Naive thymus-derived CD8-positive, alpha-beta T cell (primary cell): ENCODE measurements at regions of chr2 and their contacts with region 1.

Region 1: DNA sequence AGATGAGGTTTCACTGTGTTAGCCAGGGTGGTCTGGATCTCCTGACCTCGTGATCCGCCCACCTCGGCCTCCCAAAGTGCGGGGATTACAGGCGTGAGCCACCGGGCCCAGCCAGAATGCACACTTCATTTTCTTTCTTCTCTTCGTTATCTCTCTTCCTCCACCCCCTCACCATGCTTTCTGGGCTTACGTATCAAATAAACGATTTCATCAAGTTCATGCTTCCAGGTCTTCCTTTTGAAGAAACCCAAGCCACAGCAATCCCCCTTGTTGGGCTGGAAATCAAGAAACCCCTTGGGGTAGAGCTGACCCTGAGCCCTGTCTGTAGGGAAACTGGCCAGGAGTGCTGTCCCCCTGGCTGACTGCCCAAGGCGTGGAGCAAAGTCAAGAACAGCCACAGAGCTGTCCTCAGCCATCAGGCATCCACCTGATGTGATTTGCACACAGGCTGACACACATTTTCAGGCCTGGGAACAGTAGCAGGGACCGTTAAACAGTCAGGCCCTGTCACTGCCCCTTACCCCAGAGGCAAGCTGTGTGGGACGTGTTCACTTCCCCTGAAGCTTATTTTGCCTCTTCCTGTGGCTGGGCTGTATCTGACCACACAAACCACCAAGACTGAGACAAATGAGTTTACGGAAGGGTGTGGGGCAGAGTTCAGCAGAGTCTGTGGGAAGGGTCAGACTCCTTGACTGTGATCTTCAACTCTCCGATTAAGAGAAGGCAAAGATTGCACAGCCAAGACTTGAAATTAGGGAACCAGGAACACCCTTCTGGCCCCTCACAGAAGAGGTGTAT is 15.1 kb upstream of the NMUR1 start:
- DNase-seq: peak in 4 of 10 donors; percentile 22 to 45 (median 32)
- ATAC-seq: peak; percentile 77 to 81
- H3K4me3 Mint-ChIP-seq: peak overlapping the region; percentile 60 to 85 (median 74)
- H3K27ac Mint-ChIP-seq: peak overlapping the region; percentile 77 to 95 (median 84)
- H3K4me1 Mint-ChIP-seq: peaks cover 19 to 61% (median 35%) of the 10 kb centered on the region in 4 donors
- H3K27me3 Mint-ChIP-seq: peaks cover 0 to 2% (median 0%) of the 10 kb centered on the region in 5 donors

Region 2: DNA sequence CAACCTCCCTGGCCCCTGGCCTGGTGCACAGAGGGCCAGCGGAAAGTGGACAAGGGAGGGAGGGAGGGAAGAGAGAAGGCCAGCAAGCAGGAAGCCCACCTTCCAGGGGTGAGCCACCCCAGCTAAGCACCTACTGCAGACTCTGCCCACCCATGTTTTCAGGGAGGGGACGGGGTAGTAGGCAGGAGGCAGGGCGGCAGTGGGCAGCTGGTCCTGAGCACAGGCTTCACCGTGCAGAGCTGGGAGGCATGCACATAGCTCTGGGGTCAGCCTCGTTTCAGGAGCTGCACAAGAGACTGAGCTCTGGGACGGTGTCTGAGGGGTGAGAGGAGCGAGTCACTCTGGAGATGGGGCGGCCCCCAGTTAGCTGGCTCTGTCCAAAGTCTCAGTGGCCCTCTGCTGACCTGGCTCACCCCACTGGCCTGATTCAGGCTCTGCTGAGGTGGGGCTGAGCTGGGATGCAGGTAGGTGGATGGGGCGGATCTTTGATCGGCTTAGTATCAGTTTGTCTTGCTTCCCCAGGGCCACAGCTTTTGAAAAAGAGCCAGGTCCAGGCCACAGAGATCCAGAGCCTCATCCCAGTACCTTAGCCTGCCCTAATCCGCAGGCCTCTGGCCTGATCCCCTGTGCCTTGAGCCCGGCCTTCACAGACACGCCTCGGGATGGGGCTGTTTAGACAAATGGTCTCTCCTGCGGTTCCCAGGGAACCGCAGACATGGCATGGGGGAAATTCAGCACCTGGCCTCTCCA is 18.8 kb before region 1 on chr2:
- POLR2A ChIA-PET with region 1: interaction called, 10 read pairs
- DNase-seq: no peak
- ATAC-seq: no peak
- H3K4me3 Mint-ChIP-seq: peak overlapping the region in 4 of 10 donors; percentile 19 to 47 (median 23)
- H3K27ac Mint-ChIP-seq: no peak overlapping the region
- H3K4me1 Mint-ChIP-seq: peaks cover 16 to 68% (median 43%) of the 10 kb centered on the region in 4 donors
- H3K27me3 Mint-ChIP-seq: peaks cover 4 to 14% (median 6%) of the 10 kb centered on the region in 5 donors